Activated B cell treated with CpG ODN at 0.5 μM for 24 hours (primary cell): ENCODE measurements at regions of chr1 and their contacts with region 1.

Region 1: GRCh38 chr1:185603158-185603557 is 131.0 kb upstream of the HMCN1 start:
- DNase-seq: peak; percentile 26
- ATAC-seq: peak; percentile 92
- H3K4me3 Mint-ChIP-seq: no peak overlapping the region
- H3K27ac Mint-ChIP-seq: no peak overlapping the region
- H3K4me1 Mint-ChIP-seq: peaks cover 42% of the 10 kb centered on the region
- H3K27me3 Mint-ChIP-seq: no peaks in the 10 kb centered on the region
- CTCF ChIP-seq: no peak

Region 2: GRCh38 chr1:185526344-185527307 is 76.5 kb before region 1 on chr1:
- CTCF ChIA-PET with region 1: no interaction called
- POLR2A ChIA-PET with region 1: interaction called, 3 read pairs
- intact Hi-C with region 1: loop called (anchors 2 kb)
- DNase-seq: no peak
- ATAC-seq: peak; percentile 97
- H3K4me3 Mint-ChIP-seq: peak overlapping the region; percentile 1
- H3K27ac Mint-ChIP-seq: peak overlapping the region; percentile 77
- H3K4me1 Mint-ChIP-seq: peaks cover 21% of the 10 kb centered on the region
- H3K27me3 Mint-ChIP-seq: no peaks in the 10 kb centered on the region
- CTCF ChIP-seq: no peak

Region 3: DNA sequence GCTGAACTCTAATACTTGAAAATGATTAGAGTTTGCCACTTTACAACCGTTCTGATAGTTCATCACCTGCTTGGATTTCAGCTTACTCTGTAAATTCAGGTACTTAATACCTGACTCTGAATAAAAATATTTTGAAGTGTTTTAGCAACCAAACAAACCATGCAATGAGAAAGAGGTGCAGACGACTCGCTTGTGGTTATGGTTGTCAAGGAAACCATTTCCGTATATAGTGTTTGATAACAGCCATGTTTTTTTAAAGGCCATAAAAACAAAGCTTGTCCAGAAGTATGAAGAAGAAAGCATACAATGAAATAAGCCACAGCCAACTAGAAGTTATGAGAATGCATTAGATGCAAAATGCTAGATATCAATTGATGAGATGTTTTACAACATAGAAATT is 36.2 kb before region 1 on chr1:
- CTCF ChIA-PET with region 1: no interaction called
- POLR2A ChIA-PET with region 1: interaction called, 3 read pairs
- intact Hi-C with region 1: loop called (anchors 1 kb)
- DNase-seq: no peak
- ATAC-seq: peak; percentile 80
- H3K4me3 Mint-ChIP-seq: peak overlapping the region; percentile 13
- H3K27ac Mint-ChIP-seq: peak overlapping the region; percentile 74
- H3K4me1 Mint-ChIP-seq: peaks cover 30% of the 10 kb centered on the region
- H3K27me3 Mint-ChIP-seq: no peaks in the 10 kb centered on the region
- CTCF ChIP-seq: no peak

Region 4: GRCh38 chr1:185636848-185637247 is 33.7 kb after region 1 on chr1:
- CTCF ChIA-PET with region 1: no interaction called
- POLR2A ChIA-PET with region 1: interaction called, 12 read pairs
- intact Hi-C with region 1: loop called (anchors 1 kb)
- DNase-seq: no peak
- ATAC-seq: peak; percentile 87
- H3K4me3 Mint-ChIP-seq: no peak overlapping the region
- H3K27ac Mint-ChIP-seq: peak overlapping the region; percentile 46
- H3K4me1 Mint-ChIP-seq: peaks cover 25% of the 10 kb centered on the region
- H3K27me3 Mint-ChIP-seq: no peaks in the 10 kb centered on the region
- CTCF ChIP-seq: no peak

Region 5: DNA sequence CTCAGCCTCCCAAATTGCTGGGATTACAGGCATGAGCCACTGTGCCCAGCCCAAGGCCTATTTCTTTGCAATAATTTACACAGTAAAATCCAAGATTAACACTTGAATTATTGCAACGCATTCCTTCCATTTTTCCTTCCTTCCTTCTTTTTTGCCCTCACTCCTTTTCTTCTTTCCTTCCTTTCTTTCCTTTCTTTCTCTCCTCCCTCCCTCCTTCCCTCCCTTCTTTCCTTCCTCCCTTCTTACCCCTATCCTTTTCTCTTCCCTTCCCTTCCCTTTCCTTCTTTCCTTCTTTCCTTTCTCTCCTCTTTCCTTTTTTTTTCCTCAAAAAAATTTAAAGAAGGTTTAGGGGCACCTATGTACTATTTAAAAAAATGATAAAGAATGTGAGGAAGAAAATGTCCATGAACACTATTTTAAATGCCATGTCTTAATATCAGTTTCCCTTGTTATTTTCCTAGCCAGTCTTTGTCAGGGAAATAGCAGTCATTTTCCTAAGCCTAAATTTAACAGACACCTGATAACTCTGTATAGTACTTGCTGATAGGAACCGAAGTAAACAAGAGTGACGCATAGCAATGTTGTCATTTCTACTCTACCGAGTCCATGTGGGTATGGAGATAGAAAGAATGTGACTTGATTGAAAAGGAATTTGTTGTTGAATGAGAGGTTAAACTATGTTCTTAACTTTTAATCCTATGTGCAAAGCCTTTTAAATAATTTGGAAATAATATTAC is 51.2 kb after region 1 on chr1:
- CTCF ChIA-PET with region 1: no interaction called
- POLR2A ChIA-PET with region 1: no interaction called
- intact Hi-C with region 1: no loop called
- DNase-seq: no peak
- ATAC-seq: no peak
- H3K4me3 Mint-ChIP-seq: no peak overlapping the region
- H3K27ac Mint-ChIP-seq: no peak overlapping the region
- H3K4me1 Mint-ChIP-seq: no peaks in the 10 kb centered on the region
- H3K27me3 Mint-ChIP-seq: no peaks in the 10 kb centered on the region
- CTCF ChIP-seq: no peak